Activated CD4-positive, alpha-beta memory T cell treated with anti-CD3 and anti-CD28 coated beads for 36 hours (primary cell): ENCODE measurements at regions of chr12 and their contacts with region 1.

Region 1: DNA sequence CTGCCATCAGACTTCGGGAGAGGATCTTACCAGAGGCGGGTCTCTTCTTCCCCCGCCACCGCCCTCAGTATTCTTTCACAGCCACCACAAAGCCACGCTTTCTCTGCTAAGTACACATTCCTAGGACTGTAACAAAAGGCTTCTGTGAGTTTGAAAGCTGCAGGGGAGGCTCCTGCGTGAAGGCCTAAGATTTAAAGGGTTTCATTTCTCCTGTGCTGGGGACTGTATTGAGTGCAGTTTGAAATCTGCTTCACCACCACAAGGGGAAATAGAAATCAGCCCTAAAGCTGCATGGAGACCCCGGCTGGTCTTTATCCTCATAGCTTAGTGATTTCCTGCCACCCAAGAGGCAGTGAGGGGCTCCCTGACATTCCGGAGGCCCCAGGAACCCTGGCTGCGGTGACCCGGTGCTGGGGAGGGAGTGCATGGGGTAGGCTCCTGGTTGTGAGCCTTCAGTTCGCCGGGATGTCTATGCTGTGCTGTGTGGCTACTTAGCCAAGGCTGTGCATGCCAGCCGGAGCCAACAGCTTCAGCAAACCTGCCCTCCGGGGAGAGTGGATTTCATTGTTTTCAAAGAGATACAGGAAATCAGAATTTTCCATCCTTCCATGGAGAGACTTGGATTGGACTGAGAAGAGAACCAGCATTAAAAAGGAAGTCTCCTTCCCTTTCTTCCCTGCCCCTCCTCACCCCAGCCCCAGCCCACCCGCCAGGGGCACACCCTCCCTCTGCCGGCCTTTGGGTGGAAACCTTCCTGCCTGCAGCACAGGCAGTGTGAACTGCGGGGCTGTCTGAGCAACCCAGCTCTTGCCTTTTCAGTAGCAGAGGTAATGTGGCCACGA is 163.3 kb downstream of the ETV6 start:
- DNase-seq: peak; percentile 41
- H3K4me3 Mint-ChIP-seq: peak overlapping the region; percentile 63
- H3K27ac Mint-ChIP-seq: peak overlapping the region; percentile 78
- H3K4me1 Mint-ChIP-seq: peaks cover 80% of the 10 kb centered on the region
- H3K27me3 Mint-ChIP-seq: no peaks in the 10 kb centered on the region

Region 2: DNA sequence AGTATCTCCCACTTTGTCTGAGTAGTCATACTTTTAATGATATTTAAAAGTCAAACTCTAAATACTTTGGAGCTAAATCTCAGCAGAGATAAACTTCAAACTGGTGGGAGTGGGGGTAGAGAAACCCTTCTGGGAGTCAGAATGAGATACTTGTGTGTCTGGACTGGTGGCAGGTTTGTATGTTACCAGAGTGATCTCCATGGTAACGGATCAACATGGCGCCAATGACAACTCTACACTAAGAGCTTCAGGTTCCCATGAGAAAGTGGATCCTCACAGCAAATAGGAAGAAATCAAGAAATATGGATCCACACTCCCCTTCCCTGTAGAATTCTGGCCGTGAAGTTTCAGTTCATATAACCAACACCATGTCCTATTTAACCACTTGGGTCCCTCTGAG is 41.5 kb before region 1 on chr12:
- CTCF ChIA-PET with region 1: no interaction called
- POLR2A ChIA-PET with region 1: interaction called, 6 read pairs
- intact Hi-C with region 1: loop called (anchors 1 kb)
- DNase-seq: peak; percentile 49
- H3K4me3 Mint-ChIP-seq: no peak overlapping the region
- H3K27ac Mint-ChIP-seq: peak overlapping the region; percentile 88
- H3K4me1 Mint-ChIP-seq: peaks cover 93% of the 10 kb centered on the region
- H3K27me3 Mint-ChIP-seq: no peaks in the 10 kb centered on the region

Region 3: GRCh38 chr12:11780521-11781101 is 32.2 kb before region 1 on chr12:
- CTCF ChIA-PET with region 1: interaction called, 3 read pairs
- POLR2A ChIA-PET with region 1: interaction called, 8 read pairs
- intact Hi-C with region 1: loop called (anchors 2 kb)
- DNase-seq: peak; percentile 34
- H3K4me3 Mint-ChIP-seq: no peak overlapping the region
- H3K27ac Mint-ChIP-seq: peak overlapping the region; percentile 89
- H3K4me1 Mint-ChIP-seq: peaks cover 83% of the 10 kb centered on the region
- H3K27me3 Mint-ChIP-seq: no peaks in the 10 kb centered on the region

Region 4: GRCh38 chr12:11877869-11878780 is 65.3 kb after region 1 on chr12:
- CTCF ChIA-PET with region 1: no interaction called
- POLR2A ChIA-PET with region 1: no interaction called
- intact Hi-C with region 1: loop called (anchors 5 kb)
- DNase-seq: peak; percentile 37
- H3K4me3 Mint-ChIP-seq: no peak overlapping the region
- H3K27ac Mint-ChIP-seq: peak overlapping the region; percentile 55
- H3K4me1 Mint-ChIP-seq: peaks cover 51% of the 10 kb centered on the region
- H3K27me3 Mint-ChIP-seq: no peaks in the 10 kb centered on the region